ENCODE measurements at regions of chr15 and their contacts with region 1.

Region 1: DNA sequence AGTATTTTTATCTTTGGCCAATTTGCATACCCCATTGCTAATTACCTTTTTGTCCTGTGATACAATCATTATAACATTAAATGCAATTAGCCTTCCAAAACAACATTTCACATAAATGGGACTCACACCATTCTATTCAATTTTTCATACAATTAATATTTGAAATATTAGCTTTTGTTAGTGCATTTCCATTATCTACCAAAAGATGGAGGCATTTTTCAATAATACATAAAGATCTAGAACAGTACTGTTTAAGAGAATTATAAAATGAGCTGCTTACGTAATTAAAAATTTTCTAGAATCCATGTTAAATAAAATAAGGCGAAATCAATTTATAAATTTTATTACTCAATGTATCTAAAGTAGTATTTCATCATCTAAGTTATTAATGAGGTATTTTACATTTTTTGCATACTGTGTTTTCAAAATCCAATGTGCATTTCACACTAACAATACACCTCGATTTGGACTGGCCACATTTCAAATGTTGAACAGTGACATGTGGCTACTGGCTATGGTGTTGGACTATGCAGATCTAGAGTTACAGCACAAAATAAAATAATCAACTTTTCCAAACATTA is 74.3 kb downstream of the TJP1 start:
- DNase-seq: no peak
- ATAC-seq: no peak
- H3K4me3 ChIP-seq: no peak overlapping the region
- H3K27ac ChIP-seq: no peak overlapping the region
- H3K4me1 ChIP-seq: no peaks in the 10 kb centered on the region
- H3K27me3 ChIP-seq: no peaks in the 10 kb centered on the region
- CTCF ChIP-seq: peak in 1 of 3 experiments; percentile 18; a peak in 2 of 6 replicates
- EP300 ChIP-seq: no peak
- POLR2A ChIP-seq: no peak
- RAD21 ChIP-seq: no peak

Region 2: DNA sequence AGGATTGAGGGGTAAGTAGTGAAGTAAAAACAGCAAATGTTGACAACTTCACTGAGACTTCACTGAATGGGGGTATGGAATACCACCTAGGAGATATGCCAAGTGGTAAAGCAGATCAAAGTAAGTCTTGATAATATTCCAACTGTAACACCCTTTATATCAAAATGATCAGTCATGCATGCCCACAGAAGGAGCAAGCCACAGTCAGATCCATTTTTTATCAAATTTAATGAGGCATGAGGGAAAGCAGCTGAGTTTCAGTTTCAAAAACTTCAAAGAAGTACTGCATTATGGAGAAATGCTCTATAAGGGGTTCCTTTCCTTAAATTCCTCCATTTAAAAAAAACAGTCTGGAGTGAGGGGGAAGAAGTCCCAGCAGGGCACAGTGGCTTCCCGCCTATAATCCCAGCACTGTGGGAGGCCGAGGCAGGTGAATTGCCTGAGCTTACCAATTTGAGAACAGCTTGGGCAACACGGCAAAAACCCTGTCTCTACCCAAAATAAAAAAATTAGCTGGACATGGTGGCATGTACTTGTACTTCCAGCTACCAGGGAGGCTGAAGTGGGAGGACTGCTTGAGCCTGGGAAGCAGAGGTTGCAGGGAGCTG is 17.4 kb after region 1 on chr15:
- CTCF ChIA-PET with region 1: no interaction called
- POLR2A ChIA-PET with region 1: no interaction called
- RAD21 ChIA-PET with region 1: no interaction called
- SMC1A ChIA-PET with region 1: no interaction called
- in situ Hi-C with region 1: no loop called
- intact Hi-C with region 1: no loop called
- DNase-seq: no peak
- ATAC-seq: no peak
- H3K4me3 ChIP-seq: no peak overlapping the region
- H3K27ac ChIP-seq: no peak overlapping the region
- H3K4me1 ChIP-seq: no peaks in the 10 kb centered on the region
- H3K27me3 ChIP-seq: no peaks in the 10 kb centered on the region
- CTCF ChIP-seq: no peak
- EP300 ChIP-seq: no peak
- POLR2A ChIP-seq: no peak
- RAD21 ChIP-seq: no peak

Region 3: DNA sequence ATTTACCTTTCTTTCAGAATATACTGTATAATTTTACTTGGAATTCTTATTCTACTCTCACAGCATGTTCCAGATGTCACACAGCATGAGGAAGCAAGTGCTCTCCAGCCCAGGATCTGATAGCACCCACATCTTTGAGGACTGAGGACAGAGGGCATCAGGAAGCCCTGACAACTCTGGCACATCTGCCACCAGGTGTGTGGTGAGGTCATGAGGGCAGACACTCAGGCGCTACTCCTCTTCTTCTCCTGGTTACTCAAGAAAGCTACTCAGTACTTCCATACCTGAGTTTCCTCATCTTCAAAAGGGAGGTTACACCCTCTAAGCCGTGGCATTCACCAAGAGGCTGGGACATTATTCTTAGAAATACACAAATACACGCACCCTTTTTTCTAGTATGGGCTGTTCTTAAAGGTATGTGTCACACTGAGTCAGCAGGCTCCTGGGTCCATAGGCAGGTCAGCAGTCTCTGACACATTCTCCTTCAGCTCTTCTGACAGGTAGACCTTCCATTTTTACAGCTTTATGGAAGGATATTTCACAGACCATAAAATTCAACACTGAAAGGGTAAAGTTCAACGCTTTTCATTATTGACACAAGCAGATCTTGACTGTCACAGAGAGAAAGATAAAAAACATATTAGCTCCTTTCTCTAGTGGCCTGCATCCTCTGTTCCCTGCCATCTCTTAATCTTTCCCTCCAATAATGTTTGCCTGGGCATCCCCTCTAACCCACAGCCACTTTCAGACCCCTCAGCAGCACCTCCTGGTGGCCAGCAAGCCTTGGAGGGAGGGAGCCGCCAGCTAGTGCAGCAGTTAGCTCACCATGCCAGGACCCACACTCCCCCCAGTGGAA is 177.5 kb after region 1 on chr15:
- CTCF ChIA-PET with region 1: interaction called, 16 read pairs
- POLR2A ChIA-PET with region 1: no interaction called
- RAD21 ChIA-PET with region 1: interaction called, 5 read pairs
- SMC1A ChIA-PET with region 1: interaction called, 5 read pairs
- in situ Hi-C with region 1: no loop called
- intact Hi-C with region 1: loop called (anchors 5 kb)
- DNase-seq: no peak
- ATAC-seq: peak; percentile 77
- H3K4me3 ChIP-seq: no peak overlapping the region
- H3K27ac ChIP-seq: no peak overlapping the region
- H3K4me1 ChIP-seq: no peaks in the 10 kb centered on the region
- H3K27me3 ChIP-seq: no peaks in the 10 kb centered on the region; a peak in 1 of 4 replicates
- CTCF ChIP-seq: peak; percentile 35 to 40 (median 38)
- EP300 ChIP-seq: no peak
- POLR2A ChIP-seq: no peak
- RAD21 ChIP-seq: no peak; the same call in 1 of the 2 replicates

Region 4: DNA sequence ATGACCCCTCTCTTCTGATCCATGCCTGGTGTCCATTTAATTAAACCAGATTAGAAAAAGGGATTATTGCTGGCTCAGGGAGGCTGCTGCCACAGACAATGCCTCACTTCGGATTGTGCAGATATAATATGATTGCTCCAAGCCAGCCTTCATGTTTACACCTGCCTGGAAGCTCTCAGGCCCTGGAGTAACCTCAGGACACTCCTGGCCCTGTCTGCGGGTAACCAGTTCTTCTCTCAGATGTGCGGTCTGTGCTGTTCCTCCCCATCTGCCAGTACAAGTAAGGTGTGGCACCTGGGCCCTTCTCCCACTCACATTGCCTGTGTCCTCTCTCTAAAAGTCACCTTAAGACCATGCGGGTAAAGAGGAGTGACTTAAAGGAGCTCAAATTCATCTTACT is 326.0 kb after region 1 on chr15:
- CTCF ChIA-PET with region 1: interaction called, 10 read pairs
- POLR2A ChIA-PET with region 1: no interaction called
- RAD21 ChIA-PET with region 1: interaction called, 3 read pairs
- SMC1A ChIA-PET with region 1: interaction called, 7 read pairs
- in situ Hi-C with region 1: no loop called
- intact Hi-C with region 1: loop called (anchors 10 kb)
- DNase-seq: no peak
- ATAC-seq: no peak
- H3K4me3 ChIP-seq: no peak overlapping the region
- H3K27ac ChIP-seq: no peak overlapping the region
- H3K4me1 ChIP-seq: no peaks in the 10 kb centered on the region
- H3K27me3 ChIP-seq: no peaks in the 10 kb centered on the region
- CTCF ChIP-seq: no peak
- EP300 ChIP-seq: no peak
- POLR2A ChIP-seq: no peak
- RAD21 ChIP-seq: no peak

Measured in GM12878 (cell line).